ENCODE measurements at regions of chr5 and their contacts with region 1.

Region 1: GRCh38 chr5:139633295-139634027 is 14.7 kb upstream of the CXXC5 start:
- DNase-seq: peak; percentile 76
- ATAC-seq: peak; percentile 45
- H3K4me3 ChIP-seq: no peak overlapping the region
- H3K27ac ChIP-seq: no peak overlapping the region
- H3K4me1 ChIP-seq: peaks cover 52% of the 10 kb centered on the region
- H3K27me3 ChIP-seq: no peaks in the 10 kb centered on the region
- CTCF ChIP-seq: peak; percentile 97
- EP300 ChIP-seq: no peak
- POLR2A ChIP-seq: peak in 1 of 2 experiments; percentile 33; a peak in 1 of 4 replicates
- RAD21 ChIP-seq: peak; percentile 93

Region 2: GRCh38 chr5:139651853-139652787 is 18.7 kb after region 1 on chr5:
- CTCF ChIA-PET with region 1: interaction called, 10 read pairs
- POLR2A ChIA-PET with region 1: interaction called, 95 read pairs
- in situ Hi-C with region 1: no loop called
- intact Hi-C with region 1: loop called (anchors 1 kb)
- DNase-seq: no peak
- ATAC-seq: no peak
- H3K4me3 ChIP-seq: peak overlapping the region; percentile 41 to 74 (median 57); a peak in 4 of 6 replicates
- H3K27ac ChIP-seq: peak overlapping the region; percentile 49
- H3K4me1 ChIP-seq: peaks cover 67% of the 10 kb centered on the region
- H3K27me3 ChIP-seq: no peaks in the 10 kb centered on the region; a peak in 1 of 5 replicates
- CTCF ChIP-seq: no peak
- EP300 ChIP-seq: no peak
- POLR2A ChIP-seq: no peak
- RAD21 ChIP-seq: no peak

Region 3: DNA sequence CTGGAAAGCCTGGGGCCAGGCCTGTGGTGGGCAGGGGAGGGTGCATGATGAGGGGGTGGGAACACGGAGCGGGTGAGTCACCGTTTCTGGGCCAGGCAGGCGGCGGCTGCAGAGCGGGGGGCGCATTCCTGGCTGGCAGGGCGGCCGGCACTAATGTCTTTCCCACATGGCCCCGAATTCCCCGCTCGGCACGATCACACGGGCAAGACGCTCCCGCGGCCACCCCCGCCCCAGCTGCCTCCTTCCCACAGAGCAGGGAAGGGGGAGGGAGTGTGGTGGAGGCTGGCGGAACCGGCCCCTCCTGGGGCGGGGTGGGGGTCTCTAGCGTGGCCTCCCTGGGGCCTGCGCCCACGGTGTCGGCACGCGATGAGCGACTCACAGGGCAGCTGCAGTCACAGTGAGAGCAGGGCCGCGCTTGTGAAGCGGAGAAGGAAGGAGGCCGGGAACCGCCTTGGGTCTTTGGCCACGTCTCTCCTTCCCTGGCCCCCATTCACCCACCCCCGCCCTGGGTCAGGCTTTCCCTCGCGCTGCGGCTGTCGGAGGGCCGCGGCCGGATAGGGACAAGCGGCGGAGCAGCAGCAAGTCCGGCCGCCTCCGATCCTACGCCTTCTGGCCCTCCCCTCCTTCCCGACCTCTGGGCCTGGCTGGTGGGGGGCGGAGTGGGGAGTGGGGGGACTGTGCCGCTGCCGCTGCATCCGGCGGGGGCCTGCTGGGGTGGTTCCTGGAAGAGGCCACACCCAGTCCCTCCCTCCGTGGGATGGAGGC is 63.6 kb after region 1 on chr5:
- CTCF ChIA-PET with region 1: no interaction called
- POLR2A ChIA-PET with region 1: interaction called, 14 read pairs
- in situ Hi-C with region 1: no loop called
- intact Hi-C with region 1: no loop called
- DNase-seq: peak; percentile 70
- ATAC-seq: peak; percentile 51
- H3K4me3 ChIP-seq: peak overlapping the region; percentile 54 to 74 (median 66); a peak in 5 of 6 replicates
- H3K27ac ChIP-seq: peak overlapping the region; percentile 83
- H3K4me1 ChIP-seq: peaks cover 88% of the 10 kb centered on the region
- H3K27me3 ChIP-seq: no peaks in the 10 kb centered on the region
- CTCF ChIP-seq: no peak
- EP300 ChIP-seq: no peak
- POLR2A ChIP-seq: peak; percentile 36 to 59
- RAD21 ChIP-seq: 0 out of 2 replicates have a peak, but pooled peaks have one; percentile 9

Region 4: DNA sequence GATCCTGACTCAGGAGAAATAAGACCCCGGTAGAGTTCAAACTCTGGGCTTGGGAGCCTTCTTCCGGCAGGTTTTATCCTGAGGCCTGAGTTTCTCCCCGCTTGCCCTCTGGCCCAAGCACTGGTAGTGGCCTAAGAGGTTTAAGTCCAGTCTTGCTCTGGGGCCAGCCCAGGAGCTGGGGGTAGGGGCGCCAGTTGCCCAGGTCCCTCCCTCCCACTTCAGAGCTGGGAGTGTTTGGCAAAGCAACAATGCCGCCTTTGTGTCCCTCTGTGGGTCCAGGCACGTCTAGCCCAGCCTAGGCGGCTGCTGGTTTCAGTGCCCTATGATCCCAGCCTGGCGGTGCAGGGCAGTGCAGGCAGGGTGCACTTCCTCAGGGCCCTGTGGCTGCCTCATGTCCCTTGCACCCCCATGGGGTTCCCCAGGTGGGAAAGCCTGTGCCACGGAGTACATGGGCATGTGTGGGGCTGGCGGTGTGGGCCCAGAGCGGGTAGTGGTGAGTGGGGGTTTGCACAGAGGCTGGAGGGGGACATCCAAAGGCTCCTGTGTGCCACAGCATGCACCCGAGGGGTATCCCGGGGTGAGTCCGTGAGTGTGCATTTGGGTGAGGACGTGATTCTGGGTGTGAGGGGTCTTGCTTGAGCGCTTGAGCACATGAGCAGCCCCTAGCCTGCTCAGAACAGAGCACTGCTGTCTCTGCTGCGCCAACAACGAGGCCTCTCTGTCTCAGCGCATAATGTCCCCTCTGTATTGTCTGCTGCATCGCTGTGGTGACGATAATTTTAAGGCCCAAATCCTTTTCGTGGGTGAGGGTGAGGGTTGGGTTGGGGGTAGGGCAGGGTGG is 100.5 kb after region 1 on chr5:
- CTCF ChIA-PET with region 1: no interaction called
- POLR2A ChIA-PET with region 1: interaction called, 29 read pairs
- in situ Hi-C with region 1: no loop called
- intact Hi-C with region 1: no loop called
- DNase-seq: peak; percentile 98
- ATAC-seq: peak; percentile 97
- H3K4me3 ChIP-seq: peak overlapping the region; percentile 60 to 96 (median 81)
- H3K27ac ChIP-seq: peak overlapping the region; percentile 100
- H3K4me1 ChIP-seq: peaks cover 55% of the 10 kb centered on the region
- H3K27me3 ChIP-seq: no peaks in the 10 kb centered on the region; a peak in 1 of 5 replicates
- CTCF ChIP-seq: peak; percentile 53
- EP300 ChIP-seq: peak; percentile 84
- POLR2A ChIP-seq: peak in 1 of 2 experiments; percentile 96; a peak in 2 of 4 replicates
- RAD21 ChIP-seq: peak; percentile 76

Region 5: GRCh38 chr5:139844472-139845145 is 211.1 kb after region 1 on chr5:
- CTCF ChIA-PET with region 1: no interaction called
- POLR2A ChIA-PET with region 1: no interaction called
- in situ Hi-C with region 1: no loop called
- intact Hi-C with region 1: loop called (anchors 10 kb)
- DNase-seq: peak; percentile 66
- ATAC-seq: peak; percentile 84
- H3K4me3 ChIP-seq: no peak overlapping the region
- H3K27ac ChIP-seq: no peak overlapping the region
- H3K4me1 ChIP-seq: no peaks in the 10 kb centered on the region
- H3K27me3 ChIP-seq: peaks cover 6 to 49% of the 10 kb centered on the region in 2 experiments; a peak in 3 of 5 replicates
- CTCF ChIP-seq: peak; percentile 87
- EP300 ChIP-seq: no peak
- POLR2A ChIP-seq: no peak
- RAD21 ChIP-seq: peak; percentile 73

Measured in HepG2 (cell line).